ENCODE measurements at regions of chr13 and their contacts with region 1.

Region 1: DNA sequence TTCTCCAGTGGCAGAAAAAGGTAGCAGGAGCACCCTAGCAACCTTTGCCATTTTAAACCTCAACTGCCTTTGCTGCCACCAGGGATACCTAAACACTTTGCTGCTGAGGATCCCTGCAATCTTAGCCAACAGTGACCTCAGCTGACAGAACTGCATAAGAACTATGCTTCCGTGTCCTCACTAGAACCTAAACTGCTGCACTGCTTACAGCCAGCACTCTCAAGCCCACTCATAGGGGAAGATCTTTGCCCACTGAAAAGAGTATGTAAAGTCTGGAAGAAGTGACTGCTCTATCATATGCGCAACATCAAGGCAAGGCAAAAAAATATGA is 270.0 kb upstream of the PCDH20 start:
- ATAC-seq: peak in 2 of 8 experiments; percentile 65 to 91
- H3K4me3 ChIP-seq: no peak overlapping the region
- H3K27ac ChIP-seq: no peak overlapping the region
- H3K4me1 ChIP-seq: no peaks in the 10 kb centered on the region

Region 2: DNA sequence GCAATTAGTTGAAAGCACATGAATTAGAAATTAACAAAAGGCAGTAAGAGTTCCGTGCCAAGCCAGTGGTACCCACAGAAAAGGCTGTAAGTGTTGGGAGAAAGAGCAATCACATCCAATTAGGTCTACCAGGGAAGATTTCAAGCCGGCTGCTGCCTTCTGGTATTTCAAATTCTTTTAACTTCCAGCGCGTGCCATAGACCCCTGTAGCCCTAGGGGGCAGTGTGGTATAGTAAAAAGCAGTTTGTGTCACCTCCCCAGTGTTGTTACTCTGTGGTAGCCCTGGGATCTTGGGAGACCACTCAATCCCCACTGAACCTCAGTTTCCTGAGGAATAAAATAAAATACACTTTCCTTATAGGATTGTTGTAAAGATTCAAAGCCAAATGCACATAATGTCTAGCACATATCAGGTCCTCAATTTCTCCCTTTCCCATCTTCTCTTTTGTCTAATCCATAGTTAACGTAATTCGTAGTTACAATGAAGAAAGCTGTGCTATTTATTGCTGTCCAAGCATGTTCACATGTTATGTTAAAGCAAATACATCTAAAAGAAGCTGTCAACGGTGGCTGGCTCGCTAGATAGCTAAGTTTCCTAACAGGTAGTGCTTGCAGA is 1058.5 kb before region 1 on chr13:
- in situ Hi-C with region 1: loop called in 1 of 9 experiments (anchors 25 kb)
- ATAC-seq: peak in 5 of 8 experiments; percentile 45 to 87 (median 68)
- H3K4me3 ChIP-seq: no peak overlapping the region
- H3K27ac ChIP-seq: no peak overlapping the region
- H3K4me1 ChIP-seq: no peaks in the 10 kb centered on the region

Region 3: DNA sequence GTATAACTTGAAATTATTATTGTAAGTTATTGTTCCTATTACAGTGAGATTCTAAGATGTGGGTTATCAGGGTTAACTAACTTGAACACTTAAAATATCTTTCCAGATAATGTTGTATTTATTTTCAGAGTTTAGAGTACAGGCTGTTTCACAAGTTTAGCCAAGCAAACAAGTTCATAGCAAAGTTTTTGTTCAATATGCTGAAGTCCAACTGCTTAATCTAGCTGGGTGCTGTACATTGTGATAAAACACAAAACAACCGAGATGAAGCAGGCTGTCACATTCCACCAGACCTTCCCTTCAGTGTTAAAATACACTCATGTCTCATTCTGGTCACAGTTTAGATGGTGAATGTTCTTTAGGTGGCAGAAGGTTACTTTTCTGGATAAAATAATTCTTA is 122.0 kb before region 1 on chr13:
- in situ Hi-C with region 1: no loop called
- ATAC-seq: no peak
- H3K4me3 ChIP-seq: no peak overlapping the region
- H3K27ac ChIP-seq: no peak overlapping the region
- H3K4me1 ChIP-seq: no peaks in the 10 kb centered on the region